ENCODE measurements at regions of chr6 and their contacts with region 1.

Region 1: GRCh38 chr6:83192871-83193746 is at the starts of genes PGM3 and RWDD2A:
- DNase-seq: peak; percentile 84 to 90 (median 88)
- ATAC-seq: peak; percentile 99
- H3K4me3 ChIP-seq: peak within 1 kb of the TSS; percentile 93
- H3K4me3 Mint-ChIP-seq: peak within 1 kb of the TSS; percentile 92 to 99 (median 98)
- H3K27ac ChIP-seq: peak within 1 kb of the TSS; percentile 91
- H3K27ac Mint-ChIP-seq: peak within 1 kb of the TSS; percentile 89 to 99 (median 97)
- H3K4me1 ChIP-seq: peaks cover 5 to 12% of the 10 kb centered on the region in 2 donors
- H3K4me1 Mint-ChIP-seq: peaks cover 24 to 68% (median 63%) of the 10 kb centered on the region in 7 donors
- H3K27me3 ChIP-seq: no peaks in the 10 kb centered on the region
- H3K27me3 Mint-ChIP-seq: peaks cover 0 to 6% (median 0%) of the 10 kb centered on the region in 5 donors
- total RNA-seq, gene PGM3: 22.0 to 37.3 (median 27.6) TPM
- total RNA-seq, gene RWDD2A: 1.8 to 6.4 (median 2.7) TPM

Region 2: DNA sequence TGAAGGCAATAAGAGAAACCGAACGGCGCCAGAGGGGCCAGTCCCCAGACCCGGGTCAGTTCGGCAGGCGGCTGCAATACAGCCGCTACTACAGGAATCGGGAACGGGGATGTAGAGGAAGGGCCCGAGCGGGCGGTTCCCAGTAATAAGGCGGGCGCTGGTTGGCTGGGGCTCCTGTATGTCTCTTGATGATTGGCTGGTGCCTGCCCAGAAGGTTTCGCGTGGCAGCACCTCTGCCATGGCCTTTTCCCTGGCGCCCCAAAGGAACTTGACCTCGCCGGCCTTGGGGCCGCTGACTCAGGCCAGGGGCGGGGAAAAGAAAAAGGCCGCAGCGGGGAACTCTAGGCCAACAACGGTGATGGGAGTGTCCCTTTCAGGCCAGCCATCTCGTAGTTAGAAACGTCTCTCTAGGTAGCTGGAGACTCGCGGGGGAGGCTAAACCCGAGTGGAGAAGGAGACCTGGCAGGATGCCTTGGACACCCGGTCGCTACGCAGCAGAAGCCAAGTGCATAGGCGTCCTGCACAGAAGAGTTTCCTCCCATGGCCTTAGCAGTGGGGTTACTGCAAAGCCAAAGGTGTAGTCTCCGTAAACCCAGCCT is 945.4 kb before region 1 on chr6 and contains the start of gene IBTK:
- CTCF ChIA-PET with region 1: no interaction called
- POLR2A ChIA-PET with region 1: no interaction called
- intact Hi-C with region 1: loop called (anchors 1 to 2 kb)
- DNase-seq: peak; percentile 86 to 97 (median 92)
- ATAC-seq: peak; percentile 97
- H3K4me3 ChIP-seq: peak within 1 kb of the TSS; percentile 87
- H3K4me3 Mint-ChIP-seq: peak within 1 kb of the TSS; percentile 92 to 99 (median 98)
- H3K27ac ChIP-seq: peak within 1 kb of the TSS; percentile 85
- H3K27ac Mint-ChIP-seq: peak within 1 kb of the TSS; percentile 93 to 99 (median 97)
- H3K4me1 ChIP-seq: peaks cover 12 to 15% of the 10 kb centered on the region in 2 donors
- H3K4me1 Mint-ChIP-seq: peaks cover 20 to 51% (median 42%) of the 10 kb centered on the region in 7 donors
- H3K27me3 ChIP-seq: no peaks in the 10 kb centered on the region
- H3K27me3 Mint-ChIP-seq: no peaks in the 10 kb centered on the region
- total RNA-seq, gene IBTK: 16.6 to 35.8 (median 26.1) TPM

Region 3: GRCh38 chr6:83169511-83169910 is 23.6 kb before region 1 on chr6:
- CTCF ChIA-PET with region 1: no interaction called
- POLR2A ChIA-PET with region 1: interaction called, 3 read pairs
- intact Hi-C with region 1: loop called in 1 of 2 experiments (anchors 2 kb)
- DNase-seq: no peak
- ATAC-seq: no peak
- H3K4me3 ChIP-seq: no peak overlapping the region
- H3K4me3 Mint-ChIP-seq: no peak overlapping the region
- H3K27ac ChIP-seq: no peak overlapping the region
- H3K27ac Mint-ChIP-seq: peak overlapping the region in 2 of 9 donors; percentile 18 to 42
- H3K4me1 ChIP-seq: no peaks in the 10 kb centered on the region
- H3K4me1 Mint-ChIP-seq: peaks cover 0 to 3% (median 0%) of the 10 kb centered on the region in 7 donors
- H3K27me3 ChIP-seq: no peaks in the 10 kb centered on the region
- H3K27me3 Mint-ChIP-seq: no peaks in the 10 kb centered on the region

Region 4: GRCh38 chr6:83215131-83216047 is 22.3 kb after region 1 on chr6:
- CTCF ChIA-PET with region 1: interaction called, 3 read pairs
- POLR2A ChIA-PET with region 1: interaction called, 4 read pairs
- intact Hi-C with region 1: loop called (anchors 1 to 2 kb)
- DNase-seq: peak; percentile 8 to 56 (median 38)
- ATAC-seq: peak; percentile 98
- H3K4me3 ChIP-seq: no peak overlapping the region
- H3K4me3 Mint-ChIP-seq: no peak overlapping the region
- H3K27ac ChIP-seq: no peak overlapping the region
- H3K27ac Mint-ChIP-seq: no peak overlapping the region
- H3K4me1 ChIP-seq: no peaks in the 10 kb centered on the region
- H3K4me1 Mint-ChIP-seq: no peaks in the 10 kb centered on the region
- H3K27me3 ChIP-seq: no peaks in the 10 kb centered on the region
- H3K27me3 Mint-ChIP-seq: peaks cover 8 to 29% (median 12%) of the 10 kb centered on the region in 5 donors

Region 5: GRCh38 chr6:83859410-83860358 is 666.6 kb after region 1 on chr6 and contains the start of gene CYB5R4:
- CTCF ChIA-PET with region 1: no interaction called
- POLR2A ChIA-PET with region 1: no interaction called
- intact Hi-C with region 1: loop called (anchors 2 to 5 kb)
- DNase-seq: peak; percentile 88 to 95 (median 94)
- ATAC-seq: peak; percentile 98
- H3K4me3 ChIP-seq: peak within 1 kb of the TSS; percentile 92
- H3K4me3 Mint-ChIP-seq: peak within 1 kb of the TSS; percentile 87 to 100 (median 98)
- H3K27ac ChIP-seq: peak within 1 kb of the TSS; percentile 82
- H3K27ac Mint-ChIP-seq: peak within 1 kb of the TSS; percentile 85 to 96 (median 91)
- H3K4me1 ChIP-seq: peaks cover 14 to 21% of the 10 kb centered on the region in 2 donors
- H3K4me1 Mint-ChIP-seq: peaks cover 23 to 47% (median 37%) of the 10 kb centered on the region in 7 donors
- H3K27me3 ChIP-seq: no peaks in the 10 kb centered on the region
- H3K27me3 Mint-ChIP-seq: peaks cover 8 to 18% (median 16%) of the 10 kb centered on the region in 5 donors
- total RNA-seq, gene CYB5R4: 17.8 to 38.6 (median 21.0) TPM

Region 6: GRCh38 chr6:84314377-84314898 is 1121.3 kb after region 1 on chr6:
- CTCF ChIA-PET with region 1: no interaction called
- POLR2A ChIA-PET with region 1: no interaction called
- intact Hi-C with region 1: no loop called
- DNase-seq: no peak
- ATAC-seq: no peak
- H3K4me3 ChIP-seq: no peak overlapping the region
- H3K4me3 Mint-ChIP-seq: no peak overlapping the region
- H3K27ac ChIP-seq: no peak overlapping the region
- H3K27ac Mint-ChIP-seq: no peak overlapping the region
- H3K4me1 ChIP-seq: no peaks in the 10 kb centered on the region
- H3K4me1 Mint-ChIP-seq: peaks cover 0 to 2% (median 0%) of the 10 kb centered on the region in 7 donors
- H3K27me3 ChIP-seq: no peaks in the 10 kb centered on the region
- H3K27me3 Mint-ChIP-seq: peaks cover 0 to 8% (median 0%) of the 10 kb centered on the region in 5 donors

Measured in naive thymus-derived CD4-positive, alpha-beta T cell (primary cell).